ENCODE measurements at regions of chr22 and their contacts with region 1.

Region 1: GRCh38 chr22:37419969-37420685 is 7.2 kb downstream of the ELFN2 start:
- DNase-seq: no peak
- ATAC-seq: peak; percentile 71
- H3K4me3 ChIP-seq: peak overlapping the region; percentile 48 to 57
- H3K27ac ChIP-seq: peak overlapping the region; percentile 34; the same call in 1 of the 2 replicates
- H3K4me1 ChIP-seq: peaks cover 7% of the 10 kb centered on the region; the same call in 1 of the 2 replicates
- H3K27me3 ChIP-seq: no peaks in the 10 kb centered on the region
- CTCF ChIP-seq: no peak; the same call in 1 of the 2 replicates

Region 2: DNA sequence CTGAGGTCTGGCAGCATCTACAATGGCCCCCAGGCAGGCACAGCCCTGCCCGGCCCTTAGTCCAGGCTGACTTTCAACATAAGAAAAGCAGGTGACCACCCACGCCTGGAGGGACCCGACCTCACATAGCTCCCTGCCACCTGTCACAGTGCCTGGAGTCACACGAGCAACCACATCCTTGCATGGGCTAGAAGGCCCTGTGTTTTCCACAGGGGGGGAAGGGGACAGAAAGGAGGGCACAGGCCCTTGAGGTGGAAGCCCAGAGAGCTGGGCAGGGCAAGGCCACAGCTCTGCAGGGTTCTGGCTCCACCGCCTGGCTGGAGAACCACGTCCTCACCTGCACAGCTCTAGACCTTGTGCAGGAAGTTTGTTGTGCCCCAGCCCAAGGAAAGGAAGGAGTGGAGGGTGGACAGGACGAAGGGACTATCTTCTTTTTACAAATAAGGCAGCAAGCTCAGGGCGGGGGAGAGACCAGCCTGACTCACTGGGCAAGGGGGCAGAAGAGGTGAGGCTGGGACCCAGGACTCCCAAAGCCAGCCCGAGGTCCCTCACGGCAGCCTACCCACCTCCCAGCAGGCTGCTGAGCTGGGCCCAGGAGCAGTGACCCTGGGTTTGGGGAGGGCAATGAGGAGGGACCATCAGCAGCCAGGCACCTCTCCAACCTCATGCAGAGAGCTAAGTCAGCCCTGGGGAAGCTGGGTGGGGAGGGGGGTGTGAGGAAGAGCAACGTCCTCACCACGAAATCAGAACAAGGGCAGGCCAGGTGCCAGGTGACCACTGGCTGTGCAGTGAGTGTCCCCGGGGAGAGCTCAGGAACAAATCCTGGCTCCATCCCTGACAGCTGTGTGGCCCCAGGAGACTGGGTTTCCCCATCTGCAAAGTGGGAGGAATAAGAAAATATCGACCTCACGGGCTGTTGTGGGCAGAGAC is 236.4 kb before region 1 on chr22:
- CTCF ChIA-PET with region 1: interaction called, 10 read pairs
- POLR2A ChIA-PET with region 1: no interaction called
- in situ Hi-C with region 1: no loop called
- intact Hi-C with region 1: no loop called
- DNase-seq: no peak
- ATAC-seq: no peak
- H3K4me3 ChIP-seq: no peak overlapping the region
- H3K27ac ChIP-seq: peak overlapping the region; percentile 72
- H3K4me1 ChIP-seq: peaks cover 35% of the 10 kb centered on the region
- H3K27me3 ChIP-seq: no peaks in the 10 kb centered on the region
- CTCF ChIP-seq: no peak

Region 3: DNA sequence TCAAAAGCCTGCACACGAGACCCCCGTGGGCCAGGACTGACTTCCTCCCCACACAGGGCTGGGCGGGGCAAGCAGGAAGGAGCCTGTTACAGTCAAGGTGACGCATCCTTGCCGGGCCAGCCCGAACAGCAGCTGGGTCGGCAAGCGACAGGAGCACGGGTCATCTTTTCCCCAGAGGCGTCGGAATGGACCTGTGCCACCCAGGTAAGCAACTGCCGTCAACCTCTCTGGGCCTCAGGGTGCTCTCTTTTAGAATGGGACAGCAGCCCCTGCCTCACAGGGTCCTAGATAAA is 137.8 kb before region 1 on chr22 and contains the start of gene CYTH4:
- CTCF ChIA-PET with region 1: no interaction called
- POLR2A ChIA-PET with region 1: no interaction called
- in situ Hi-C with region 1: no loop called
- intact Hi-C with region 1: no loop called
- DNase-seq: no peak
- ATAC-seq: peak; percentile 55; the same call in 1 of the 2 replicates
- H3K4me3 ChIP-seq: peak within 1 kb of the TSS in 1 of 2 experiments; percentile 31; a peak in 2 of 4 replicates
- H3K27ac ChIP-seq: no peak within 1 kb of the TSS
- H3K4me1 ChIP-seq: no peaks in the 10 kb centered on the region
- H3K27me3 ChIP-seq: no peaks in the 10 kb centered on the region
- CTCF ChIP-seq: no peak
- total RNA-seq, gene CYTH4: 1.3 TPM

Measured in Panc1 (cell line).